ENCODE measurements at regions of chr14 and their contacts with region 1.

Region 1: GRCh38 chr14:33792720-33793368 is 158.0 kb downstream of the EGLN3 start:
- DNase-seq: peak; percentile 83
- ATAC-seq: peak; percentile 90 to 91

Region 2: GRCh38 chr14:33475623-33476022 is 317.2 kb before region 1 on chr14:
- intact Hi-C with region 1: loop called in 1 of 2 experiments (anchors 10 kb)
- DNase-seq: peak; percentile 21
- ATAC-seq: no peak

Region 3: DNA sequence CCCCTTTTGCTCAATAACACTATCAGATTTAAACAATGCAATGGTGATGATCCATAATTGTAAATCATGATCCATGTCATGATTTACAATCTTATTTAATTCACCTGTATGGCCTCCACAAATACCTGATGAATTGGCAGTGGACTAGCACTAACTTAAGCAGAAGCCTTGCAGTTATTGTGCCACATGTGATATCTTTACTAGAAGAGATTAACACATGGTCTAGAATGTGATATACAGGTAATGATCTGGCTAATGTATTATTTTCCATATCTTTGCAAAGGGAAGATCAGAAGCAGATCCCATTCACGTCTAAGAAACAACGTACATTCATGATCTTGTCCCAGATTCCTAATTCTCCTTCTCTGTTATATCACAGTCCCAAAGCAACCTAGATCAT is 92.1 kb after region 1 on chr14:
- intact Hi-C with region 1: no loop called
- DNase-seq: no peak
- ATAC-seq: no peak

Measured in left cardiac atrium (tissue), 4 donors.